MCF 10A (cell line): ENCODE measurements at regions of chr14 and their contacts with region 1.

Region 1: GRCh38 chr14:39432179-39432618 is at the start of gene FBXO33:
- DNase-seq: peak; percentile 95
- H3K4me3 Mint-ChIP-seq: peak within 1 kb of the TSS; percentile 94
- H3K27ac Mint-ChIP-seq: peak within 1 kb of the TSS; percentile 100
- H3K4me1 Mint-ChIP-seq: peaks cover 24% of the 10 kb centered on the region
- H3K27me3 Mint-ChIP-seq: no peaks in the 10 kb centered on the region
- CTCF ChIP-seq: no peak
- total RNA-seq, gene FBXO33: 3.9 and 5.6 TPM in 2 replicates

Region 2: DNA sequence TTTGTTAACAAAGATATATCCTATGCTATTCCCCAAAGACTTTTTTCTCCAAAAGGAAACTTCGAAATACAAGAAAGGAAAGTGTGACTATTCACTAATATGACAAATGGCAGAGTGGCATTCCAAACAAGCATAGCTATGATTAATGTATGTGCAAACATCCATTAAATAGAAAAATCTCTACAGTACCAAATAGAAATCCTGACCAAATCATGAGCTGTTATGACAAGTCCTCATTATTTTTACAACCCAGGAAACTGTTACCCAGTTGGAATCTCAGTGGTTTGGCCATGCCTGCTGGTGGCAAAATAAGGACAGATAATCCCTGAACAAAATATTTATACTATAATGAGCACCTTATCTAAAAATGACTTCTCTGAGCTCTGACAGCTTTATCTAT is 531.3 kb before region 1 on chr14:
- CTCF ChIA-PET with region 1: no interaction called
- POLR2A ChIA-PET with region 1: no interaction called
- intact Hi-C with region 1: no loop called
- DNase-seq: no peak
- H3K4me3 Mint-ChIP-seq: no peak overlapping the region
- H3K27ac Mint-ChIP-seq: no peak overlapping the region
- H3K4me1 Mint-ChIP-seq: no peaks in the 10 kb centered on the region
- H3K27me3 Mint-ChIP-seq: no peaks in the 10 kb centered on the region
- CTCF ChIP-seq: no peak

Region 3: DNA sequence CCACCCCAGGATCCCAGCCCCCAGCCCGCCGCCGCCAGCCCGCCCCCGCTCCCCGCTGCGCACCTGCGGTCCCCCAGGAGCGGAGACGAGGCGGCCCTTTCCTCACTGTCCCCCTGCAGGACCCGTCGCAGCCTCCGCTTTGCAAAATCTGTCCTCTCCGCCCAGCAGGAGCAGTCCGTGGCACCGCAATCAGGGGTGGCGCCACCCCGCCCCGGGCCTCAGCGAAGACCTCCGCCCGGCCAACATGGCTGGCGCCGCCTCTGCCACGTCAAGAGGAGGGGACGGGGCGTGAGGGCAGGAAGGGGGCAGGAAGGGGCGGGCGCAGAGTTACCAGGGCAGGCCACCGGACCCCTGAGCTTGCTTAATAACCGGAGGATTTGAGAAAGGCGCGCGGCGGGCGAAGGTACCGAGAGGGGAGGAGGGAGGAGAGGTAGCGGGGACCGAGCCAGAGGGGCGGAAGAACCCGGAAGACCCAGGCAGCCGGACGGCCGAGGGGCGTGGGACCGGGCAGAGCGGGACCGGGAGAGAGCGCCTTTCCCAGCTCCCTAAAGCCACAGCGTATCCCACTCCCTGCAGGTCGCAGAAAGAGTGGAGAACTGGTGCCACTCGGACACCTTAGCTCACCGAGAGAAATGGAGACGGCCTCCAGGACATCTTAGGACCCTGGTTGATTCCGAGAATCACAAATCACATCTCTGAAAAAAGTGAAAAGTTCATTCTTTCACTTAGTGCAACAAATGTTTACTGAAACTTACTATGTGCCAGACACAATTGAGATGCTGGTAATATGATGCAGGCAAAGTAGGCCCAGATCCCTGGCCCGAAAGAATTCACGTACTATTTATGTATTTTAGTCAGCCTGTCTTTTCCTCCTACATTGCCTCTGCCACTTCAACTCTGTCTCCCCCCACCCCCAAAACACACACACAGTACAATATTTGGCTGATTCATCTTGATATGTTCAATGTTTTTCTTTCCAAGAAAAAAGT is 328.9 kb before region 1 on chr14 and contains the start of gene SEC23A:
- CTCF ChIA-PET with region 1: interaction called, 15 read pairs
- POLR2A ChIA-PET with region 1: interaction called, 57 read pairs
- intact Hi-C with region 1: loop called (anchors 2 kb)
- DNase-seq: peak; percentile 88
- H3K4me3 Mint-ChIP-seq: peak within 1 kb of the TSS; percentile 95
- H3K27ac Mint-ChIP-seq: peak within 1 kb of the TSS; percentile 98
- H3K4me1 Mint-ChIP-seq: peaks cover 16% of the 10 kb centered on the region
- H3K27me3 Mint-ChIP-seq: no peaks in the 10 kb centered on the region
- CTCF ChIP-seq: no peak
- total RNA-seq, gene SEC23A: 79.3 and 82.4 TPM in 2 replicates

Region 4: DNA sequence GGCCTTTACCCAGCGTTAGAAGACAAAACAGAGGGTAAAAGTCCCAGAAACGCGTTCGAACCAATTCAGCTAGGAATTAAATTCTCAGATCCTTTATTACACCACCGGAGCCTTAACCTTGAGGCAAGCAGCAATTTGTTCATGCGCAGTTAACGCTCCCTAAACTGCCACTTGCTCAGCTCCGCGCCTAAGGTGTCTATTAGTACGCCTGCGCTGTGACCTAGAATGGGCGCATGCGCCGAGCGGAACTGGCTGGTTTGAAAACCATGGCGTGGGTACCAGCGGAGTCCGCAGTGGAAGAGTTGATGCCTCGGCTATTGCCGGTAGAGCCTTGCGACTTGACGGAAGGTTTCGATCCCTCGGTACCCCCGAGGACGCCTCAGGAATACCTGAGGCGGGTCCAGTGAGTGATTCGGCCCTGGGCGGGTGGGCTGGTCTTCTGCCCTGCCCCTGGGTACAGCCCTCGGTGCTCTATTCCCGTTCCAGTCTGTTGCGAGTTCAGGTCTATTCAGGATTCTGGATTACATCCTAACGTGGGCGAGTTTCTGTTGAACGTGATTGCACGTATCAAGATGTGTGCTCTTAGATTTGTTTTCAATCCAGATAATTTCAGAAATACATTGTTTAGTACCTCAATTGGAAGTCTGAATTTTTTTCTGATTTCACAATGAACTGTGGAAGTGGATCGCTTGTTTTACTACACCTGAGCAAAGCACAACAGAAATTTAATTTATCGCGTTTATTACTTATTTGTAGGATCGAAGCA is 317.9 kb before region 1 on chr14 and contains the start of gene GEMIN2:
- CTCF ChIA-PET with region 1: interaction called, 3 read pairs
- POLR2A ChIA-PET with region 1: interaction called, 44 read pairs
- intact Hi-C with region 1: no loop called
- DNase-seq: peak; percentile 96
- H3K4me3 Mint-ChIP-seq: peak within 1 kb of the TSS; percentile 93
- H3K27ac Mint-ChIP-seq: peak within 1 kb of the TSS; percentile 90
- H3K4me1 Mint-ChIP-seq: peaks cover 6% of the 10 kb centered on the region
- H3K27me3 Mint-ChIP-seq: no peaks in the 10 kb centered on the region
- CTCF ChIP-seq: no peak
- total RNA-seq, gene GEMIN2: 21.2 and 23.4 TPM in 2 replicates

Region 5: GRCh38 chr14:39169541-39169900 is 262.7 kb before region 1 on chr14:
- CTCF ChIA-PET with region 1: interaction called, 4 read pairs
- POLR2A ChIA-PET with region 1: interaction called, 35 read pairs
- intact Hi-C with region 1: loop called (anchors 5 kb)
- DNase-seq: peak; percentile 31
- H3K4me3 Mint-ChIP-seq: peak overlapping the region; percentile 83
- H3K27ac Mint-ChIP-seq: peak overlapping the region; percentile 93
- H3K4me1 Mint-ChIP-seq: peaks cover 14% of the 10 kb centered on the region
- H3K27me3 Mint-ChIP-seq: no peaks in the 10 kb centered on the region
- CTCF ChIP-seq: no peak

Region 6: DNA sequence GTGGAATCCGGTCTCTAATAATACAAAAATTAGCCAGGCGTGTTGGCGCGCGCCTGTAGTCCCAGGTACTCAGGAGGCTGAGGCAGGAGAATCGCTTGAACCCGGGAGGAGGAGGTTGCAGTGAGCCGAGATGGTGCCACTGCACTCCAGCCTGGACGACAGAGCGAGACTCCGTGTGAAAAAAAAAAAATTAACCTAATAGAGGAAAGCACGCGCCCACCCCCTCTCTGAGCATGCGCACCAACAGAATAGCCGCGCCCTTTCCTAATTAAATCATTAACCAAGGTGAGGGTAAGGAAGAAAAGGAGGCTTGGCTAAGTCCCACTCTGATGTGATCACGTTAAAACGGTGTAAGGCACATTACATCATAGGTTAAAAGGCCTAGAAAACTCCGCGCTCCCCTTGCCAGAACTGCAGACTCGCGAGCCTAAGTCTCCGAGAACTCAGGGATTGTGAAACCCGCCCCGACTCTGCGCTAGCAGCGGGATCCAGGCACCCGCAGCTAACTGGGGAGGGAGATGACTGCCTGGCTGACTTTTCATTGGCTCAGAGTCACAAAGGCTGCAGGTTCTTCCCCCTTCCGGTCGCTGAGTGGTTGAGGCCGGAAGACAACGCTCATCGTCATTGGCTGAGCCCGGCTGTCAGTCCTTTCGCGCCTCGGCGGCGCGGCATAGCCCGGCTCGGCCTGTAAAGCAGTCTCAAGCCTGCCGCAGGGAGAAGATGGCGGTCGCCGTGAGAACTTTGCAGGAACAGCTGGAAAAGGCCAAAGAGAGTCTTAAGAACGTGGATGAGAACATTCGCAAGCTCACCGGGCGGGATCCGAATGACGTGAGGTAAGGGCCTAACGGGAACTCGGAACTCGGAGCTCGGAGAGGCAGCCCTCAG is 257.4 kb before region 1 on chr14 and contains the start of gene PNN:
- CTCF ChIA-PET with region 1: interaction called, 4 read pairs
- POLR2A ChIA-PET with region 1: interaction called, 35 read pairs
- intact Hi-C with region 1: loop called (anchors 5 kb)
- DNase-seq: peak; percentile 99
- H3K4me3 Mint-ChIP-seq: peak within 1 kb of the TSS; percentile 93
- H3K27ac Mint-ChIP-seq: peak within 1 kb of the TSS; percentile 98
- H3K4me1 Mint-ChIP-seq: peaks cover 8% of the 10 kb centered on the region
- H3K27me3 Mint-ChIP-seq: no peaks in the 10 kb centered on the region
- CTCF ChIP-seq: no peak
- total RNA-seq, gene PNN: 82.6 and 96.7 TPM in 2 replicates

Region 7: GRCh38 chr14:39446131-39446744 is 14.0 kb after region 1 on chr14:
- CTCF ChIA-PET with region 1: interaction called, 6 read pairs
- POLR2A ChIA-PET with region 1: interaction called, 16 read pairs
- intact Hi-C with region 1: no loop called
- DNase-seq: no peak
- H3K4me3 Mint-ChIP-seq: no peak overlapping the region
- H3K27ac Mint-ChIP-seq: no peak overlapping the region
- H3K4me1 Mint-ChIP-seq: peaks cover 7% of the 10 kb centered on the region
- H3K27me3 Mint-ChIP-seq: no peaks in the 10 kb centered on the region
- CTCF ChIP-seq: no peak

Region 8: DNA sequence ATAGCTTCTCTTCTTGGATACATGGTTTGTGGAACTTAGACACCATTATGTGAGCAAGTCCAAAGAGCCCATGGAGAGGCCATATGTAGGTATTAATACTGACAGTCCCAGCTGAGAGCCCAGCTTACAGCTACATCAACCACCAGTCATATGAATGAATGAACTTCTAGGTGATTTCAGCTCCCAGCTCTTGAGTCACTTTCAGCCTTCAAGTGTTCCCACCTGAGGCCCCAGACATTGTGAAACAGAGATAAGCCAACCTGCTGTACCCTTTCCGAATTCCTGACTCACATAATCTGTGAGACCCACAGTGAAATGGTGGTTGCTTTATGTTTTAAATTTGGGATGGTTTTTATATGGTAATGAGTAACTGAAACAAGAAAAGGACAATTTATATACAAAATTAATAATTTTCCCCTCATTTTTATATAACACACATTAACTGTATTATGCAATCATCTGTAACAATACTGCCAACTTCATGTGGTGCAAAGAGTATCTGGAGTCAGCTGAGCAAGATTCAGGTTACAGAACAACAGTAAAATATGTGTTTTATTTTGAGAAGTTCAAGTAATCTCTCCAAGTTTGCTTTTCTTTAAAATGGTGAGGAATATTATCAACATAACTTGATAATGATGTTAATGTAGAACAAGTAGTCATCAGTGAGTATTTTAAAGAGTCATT is 27.7 kb after region 1 on chr14:
- CTCF ChIA-PET with region 1: interaction called, 3 read pairs
- POLR2A ChIA-PET with region 1: interaction called, 10 read pairs
- intact Hi-C with region 1: no loop called
- DNase-seq: no peak
- H3K4me3 Mint-ChIP-seq: no peak overlapping the region
- H3K27ac Mint-ChIP-seq: no peak overlapping the region
- H3K4me1 Mint-ChIP-seq: peaks cover 6% of the 10 kb centered on the region
- H3K27me3 Mint-ChIP-seq: peaks cover 8% of the 10 kb centered on the region
- CTCF ChIP-seq: no peak